Posterior cingulate gyrus (tissue), 11 donors: ENCODE measurements at regions of chr10 and their contacts with region 1.

Region 1: GRCh38 chr10:124719213-124719851 is 24.8 kb downstream of the FAM53B start:
- DNase-seq: peak in 9 of 10 donors; percentile 49 to 96 (median 82)

Region 2: GRCh38 chr10:124671486-124672075 is 47.8 kb before region 1 on chr10:
- intact Hi-C with region 1: loop called (anchors 1 kb)
- DNase-seq: peak; percentile 59 to 97 (median 75)

Region 3: GRCh38 chr10:124802313-124802675 is 83.0 kb after region 1 on chr10:
- intact Hi-C with region 1: no loop called
- DNase-seq: peak in 1 of 10 donors; percentile 5

Region 4: GRCh38 chr10:125283191-125283835 is 564.0 kb after region 1 on chr10:
- intact Hi-C with region 1: no loop called
- DNase-seq: no peak